Naive thymus-derived CD8-positive, alpha-beta T cell (primary cell): ENCODE measurements at regions of chr12 and their contacts with region 1.

Region 1: GRCh38 chr12:122834104-122834920 is 945 bp upstream of the HIP1R start:
- DNase-seq: peak in 4 of 10 donors; percentile 17 to 58 (median 29)
- ATAC-seq: peak; percentile 15 to 24
- H3K4me3 Mint-ChIP-seq: peak overlapping the region; percentile 88 to 98 (median 96)
- H3K27ac Mint-ChIP-seq: peak overlapping the region; percentile 85 to 98 (median 94)
- H3K4me1 Mint-ChIP-seq: peaks cover 24 to 50% (median 38%) of the 10 kb centered on the region in 4 donors
- H3K27me3 Mint-ChIP-seq: no peaks in the 10 kb centered on the region

Region 2: DNA sequence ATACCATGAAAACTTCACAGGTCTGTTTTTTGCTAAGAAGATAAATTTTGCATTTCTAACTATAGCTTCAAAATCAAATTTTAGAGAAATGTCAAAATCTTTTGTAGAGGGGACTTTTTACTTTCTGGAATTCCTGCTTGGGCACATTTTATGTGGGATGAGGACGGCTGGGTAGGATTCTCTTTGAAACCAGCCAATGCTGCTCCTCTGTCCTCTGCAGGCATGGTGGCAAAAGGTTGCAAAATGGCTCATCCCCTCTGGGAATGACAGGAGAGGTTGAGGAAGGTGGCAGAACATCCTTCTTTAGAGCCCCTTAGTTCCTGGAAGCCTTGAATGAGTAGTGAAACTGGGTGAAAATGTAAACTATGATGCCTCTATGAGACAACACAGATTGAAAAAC is 66.6 kb before region 1 on chr12:
- POLR2A ChIA-PET with region 1: interaction called, 12 read pairs
- DNase-seq: no peak
- ATAC-seq: no peak
- H3K4me3 Mint-ChIP-seq: no peak overlapping the region
- H3K27ac Mint-ChIP-seq: peak overlapping the region in 2 of 10 donors; percentile 25 to 56
- H3K4me1 Mint-ChIP-seq: peaks cover 0 to 7% (median 5%) of the 10 kb centered on the region in 4 donors
- H3K27me3 Mint-ChIP-seq: no peaks in the 10 kb centered on the region

Region 3: DNA sequence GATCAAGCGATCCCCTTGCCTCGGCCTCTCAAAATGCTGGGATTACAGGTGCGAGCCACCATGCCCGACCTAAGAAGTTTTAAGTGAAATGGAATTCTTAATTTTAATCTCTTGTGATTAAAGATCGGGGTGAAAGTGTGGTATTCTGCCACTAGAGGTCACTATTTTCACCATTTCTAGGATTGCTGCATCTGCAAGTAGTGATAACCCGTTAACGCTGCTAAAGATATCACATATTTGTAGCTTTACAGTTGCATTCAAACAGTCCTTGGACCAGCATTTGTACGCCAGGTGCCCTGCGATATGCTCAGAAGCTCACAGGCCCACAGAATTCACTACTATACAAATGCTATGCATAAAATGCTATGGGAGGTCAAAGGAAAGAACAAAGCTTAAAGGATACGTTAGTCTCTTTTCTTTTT is 40.6 kb before region 1 on chr12:
- POLR2A ChIA-PET with region 1: interaction called, 15 read pairs
- DNase-seq: peak in 5 of 10 donors; percentile 21 to 70 (median 69)
- ATAC-seq: peak; percentile 80 to 82
- H3K4me3 Mint-ChIP-seq: no peak overlapping the region
- H3K27ac Mint-ChIP-seq: peak overlapping the region in 1 of 10 donors; percentile 51
- H3K4me1 Mint-ChIP-seq: peaks cover 2 to 5% (median 3%) of the 10 kb centered on the region in 4 donors
- H3K27me3 Mint-ChIP-seq: no peaks in the 10 kb centered on the region

Region 4: GRCh38 chr12:122860346-122861090 is 26.2 kb after region 1 on chr12:
- POLR2A ChIA-PET with region 1: interaction called, 11 read pairs
- DNase-seq: peak; percentile 63 to 89 (median 76)
- ATAC-seq: peak; percentile 55 to 57
- H3K4me3 Mint-ChIP-seq: no peak overlapping the region
- H3K27ac Mint-ChIP-seq: peak overlapping the region in 5 of 10 donors; percentile 18 to 65 (median 53)
- H3K4me1 Mint-ChIP-seq: peaks cover 0 to 18% (median 12%) of the 10 kb centered on the region in 4 donors
- H3K27me3 Mint-ChIP-seq: no peaks in the 10 kb centered on the region

Region 5: GRCh38 chr12:122895705-122896636 is 61.7 kb after region 1 on chr12 and contains the start of gene VPS37B:
- POLR2A ChIA-PET with region 1: interaction called, 13 read pairs
- DNase-seq: peak; percentile 83 to 97 (median 94)
- ATAC-seq: peak; percentile 63 to 73
- H3K4me3 Mint-ChIP-seq: peak within 1 kb of the TSS; percentile 90 to 99 (median 95)
- H3K27ac Mint-ChIP-seq: peak within 1 kb of the TSS; percentile 94 to 100 (median 99)
- H3K4me1 Mint-ChIP-seq: peaks cover 33 to 96% (median 88%) of the 10 kb centered on the region in 4 donors
- H3K27me3 Mint-ChIP-seq: no peaks in the 10 kb centered on the region
- polyA plus RNA-seq, gene VPS37B: 15.2 to 19.4 (median 19.3) TPM

Region 6: GRCh38 chr12:122917504-122918121 is 83.3 kb after region 1 on chr12:
- POLR2A ChIA-PET with region 1: no interaction called
- DNase-seq: no peak
- ATAC-seq: no peak
- H3K4me3 Mint-ChIP-seq: no peak overlapping the region
- H3K27ac Mint-ChIP-seq: peak overlapping the region in 1 of 10 donors; percentile 35
- H3K4me1 Mint-ChIP-seq: peaks cover 0 to 5% (median under 1%) of the 10 kb centered on the region in 4 donors
- H3K27me3 Mint-ChIP-seq: peaks cover 0 to under 1% (median 0%) of the 10 kb centered on the region in 5 donors

Region 7: GRCh38 chr12:122974274-122974891 is 140.1 kb after region 1 on chr12:
- POLR2A ChIA-PET with region 1: interaction called, 18 read pairs
- DNase-seq: peak; percentile 94 to 99 (median 98)
- ATAC-seq: peak; percentile 82 to 87
- H3K4me3 Mint-ChIP-seq: peak overlapping the region; percentile 92 to 99 (median 98)
- H3K27ac Mint-ChIP-seq: peak overlapping the region; percentile 97 to 100 (median 99)
- H3K4me1 Mint-ChIP-seq: peaks cover 6 to 40% (median 21%) of the 10 kb centered on the region in 4 donors
- H3K27me3 Mint-ChIP-seq: no peaks in the 10 kb centered on the region